Activated T-helper 2 cell treated with anti-CD3 and anti-CD28 coated beads, Interferon-gamma antibody, Interleukin-2, Interleukin-4, amounts not matched to agents 10 μg/mL and 5 μg/mL and 100 μg/mL, durations not matched to agents 14 hours and 24 hours and 36 hours (primary cell): ENCODE measurements at regions of chr17 and their contacts with region 1.

Region 1: DNA sequence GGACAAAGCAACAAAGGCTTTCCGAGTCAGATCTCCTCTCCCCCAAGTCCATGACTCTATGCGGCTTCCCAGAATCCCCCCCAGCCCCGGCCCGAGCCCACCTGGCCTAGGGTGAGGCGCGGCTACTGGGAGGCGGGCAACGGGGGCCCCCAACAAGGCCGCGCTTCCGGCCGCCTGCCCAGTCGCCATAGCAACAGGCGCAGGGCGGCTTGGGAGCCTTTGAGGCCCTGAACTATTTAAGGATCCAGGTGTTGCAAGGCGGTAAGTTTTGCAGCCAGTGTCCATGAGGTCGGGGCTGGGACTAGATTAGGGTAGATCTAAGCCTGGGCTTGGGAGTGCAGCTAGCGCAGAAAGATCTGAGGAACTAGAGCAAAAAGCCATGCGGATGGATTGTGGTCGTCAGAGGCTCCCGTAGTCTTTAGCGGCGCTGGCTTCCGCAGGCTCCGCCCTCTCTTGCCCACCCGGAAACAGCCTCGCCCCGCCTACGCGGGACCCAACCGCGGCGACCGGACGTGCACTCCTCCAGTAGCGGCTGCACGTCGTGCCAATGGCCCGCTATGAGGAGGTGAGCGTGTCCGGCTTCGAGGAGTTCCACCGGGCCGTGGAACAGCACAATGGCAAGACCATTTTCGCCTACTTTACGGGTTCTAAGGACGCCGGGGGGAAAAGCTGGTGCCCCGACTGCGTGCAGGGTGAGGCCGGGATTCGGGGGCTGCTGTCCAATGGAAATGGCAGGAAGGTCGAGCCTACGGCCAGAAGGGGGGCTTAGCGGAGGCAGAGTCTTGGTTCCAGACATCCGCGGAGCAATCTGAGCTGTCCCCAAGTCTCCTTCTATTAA is at the starts of genes KIAA0753 and TXNDC17:
- DNase-seq: peak; percentile 93
- H3K4me3 Mint-ChIP-seq: peak within 1 kb of the TSS; percentile 90
- H3K27ac Mint-ChIP-seq: peak within 1 kb of the TSS; percentile 99
- H3K4me1 Mint-ChIP-seq: peaks cover 52% of the 10 kb centered on the region
- H3K27me3 Mint-ChIP-seq: no peaks in the 10 kb centered on the region
- total RNA-seq, gene KIAA0753: 23.6 and 24.7 TPM in 2 replicates
- total RNA-seq, gene TXNDC17: 86.9 and 92.7 TPM in 2 replicates

Region 2: DNA sequence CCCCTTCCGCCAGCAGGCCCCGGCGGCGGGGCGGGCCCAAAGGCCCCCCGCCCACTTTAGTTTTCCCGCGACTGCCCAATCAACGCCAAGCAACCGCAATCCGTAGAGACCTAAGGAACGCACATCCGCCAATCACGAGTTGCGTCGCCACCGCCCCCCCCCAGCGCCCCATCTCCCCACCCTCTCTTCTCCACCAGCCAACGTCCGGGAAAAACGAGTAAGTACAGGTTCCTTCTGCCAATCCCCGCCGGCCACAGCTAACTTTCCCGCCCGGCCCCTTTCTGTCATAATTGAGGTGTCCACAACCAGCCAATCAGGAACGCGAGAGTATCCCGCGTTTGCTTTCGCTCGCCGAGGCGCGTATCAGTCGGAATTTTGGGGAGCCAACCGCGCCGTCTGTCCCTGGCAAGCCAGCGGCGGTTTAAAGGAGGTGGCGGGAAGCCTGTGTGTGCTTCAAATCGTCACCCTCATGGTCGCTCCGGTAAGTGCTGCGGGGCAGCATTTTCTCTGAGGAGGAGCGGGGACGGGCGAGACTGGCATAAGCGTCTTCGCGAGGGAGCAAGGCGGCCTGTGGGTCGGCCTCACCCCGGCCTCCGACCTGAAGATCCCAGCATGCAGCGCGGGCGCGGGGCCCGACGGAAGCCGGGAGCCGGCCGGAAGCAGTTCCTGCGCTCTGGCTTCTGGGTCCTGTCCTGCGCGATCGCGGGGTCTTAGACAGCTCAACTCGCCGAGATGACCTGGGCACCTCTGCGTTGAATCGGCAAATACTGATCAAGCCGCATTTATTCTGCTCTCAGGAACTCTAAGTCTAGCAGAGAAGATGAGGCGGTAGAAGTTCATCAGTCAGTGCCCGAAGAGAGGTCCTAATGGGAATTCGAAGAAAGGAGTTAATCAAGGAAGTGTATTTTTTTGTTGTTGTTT is 1154.3 kb before region 1 on chr17 and contains the start of gene MIS12:
- intact Hi-C with region 1: loop called (anchors 10 kb)
- DNase-seq: peak; percentile 96
- H3K4me3 Mint-ChIP-seq: peak within 1 kb of the TSS; percentile 97
- H3K27ac Mint-ChIP-seq: peak within 1 kb of the TSS; percentile 98
- H3K4me1 Mint-ChIP-seq: peaks cover 38% of the 10 kb centered on the region
- H3K27me3 Mint-ChIP-seq: no peaks in the 10 kb centered on the region
- total RNA-seq, gene MIS12: 34.1 and 34.9 TPM in 2 replicates

Region 3: DNA sequence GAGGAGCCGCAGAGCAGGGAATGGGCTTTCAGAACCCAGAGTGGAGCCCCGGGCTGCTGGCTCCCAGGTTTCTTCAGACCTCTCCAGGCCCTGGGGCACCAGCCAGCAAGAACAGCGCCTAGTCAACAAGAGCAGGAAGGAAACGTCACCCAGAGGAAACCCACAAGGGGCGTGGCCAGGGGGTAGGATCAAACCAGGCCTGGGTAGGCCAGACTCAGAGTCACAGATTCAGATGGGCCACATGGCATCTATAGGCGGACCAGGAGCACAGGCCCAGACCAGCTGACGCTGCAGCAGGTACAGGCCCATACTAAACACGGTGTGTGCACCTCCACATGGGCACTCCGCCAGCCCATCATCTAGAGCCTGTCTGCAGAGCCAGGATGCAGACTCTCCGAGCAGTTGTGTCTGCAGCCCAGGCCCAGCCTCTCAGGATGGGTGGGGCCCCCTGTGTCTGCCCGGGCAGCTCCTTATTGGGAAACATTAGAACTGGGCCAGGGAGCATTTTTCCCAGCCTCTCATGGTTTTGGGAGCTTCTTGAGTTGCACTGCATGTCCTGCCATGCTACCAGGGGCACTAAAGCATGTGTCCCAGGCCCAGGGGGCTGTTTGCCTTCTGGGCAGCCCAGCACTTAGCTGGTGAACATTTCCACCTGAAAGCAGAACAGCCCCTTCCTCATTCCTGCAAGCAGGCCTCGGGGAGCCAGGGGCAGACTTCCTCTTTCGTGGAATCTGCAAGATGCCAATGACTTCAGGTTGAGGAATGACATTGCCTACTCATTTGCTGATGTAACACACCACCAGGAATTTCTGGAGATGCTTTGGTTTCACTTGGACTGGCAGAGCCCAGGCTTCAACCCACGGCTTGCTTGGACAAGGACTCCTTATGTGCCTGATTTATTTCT is 1056.1 kb before region 1 on chr17 and contains the start of gene NLRP1:
- intact Hi-C with region 1: loop called (anchors 10 kb)
- DNase-seq: peak; percentile 92
- H3K4me3 Mint-ChIP-seq: peak within 1 kb of the TSS; percentile 89
- H3K27ac Mint-ChIP-seq: peak within 1 kb of the TSS; percentile 93
- H3K4me1 Mint-ChIP-seq: peaks cover 55% of the 10 kb centered on the region
- H3K27me3 Mint-ChIP-seq: peaks cover 6% of the 10 kb centered on the region
- total RNA-seq, gene NLRP1: 26.3 and 26.9 TPM in 2 replicates

Region 4: DNA sequence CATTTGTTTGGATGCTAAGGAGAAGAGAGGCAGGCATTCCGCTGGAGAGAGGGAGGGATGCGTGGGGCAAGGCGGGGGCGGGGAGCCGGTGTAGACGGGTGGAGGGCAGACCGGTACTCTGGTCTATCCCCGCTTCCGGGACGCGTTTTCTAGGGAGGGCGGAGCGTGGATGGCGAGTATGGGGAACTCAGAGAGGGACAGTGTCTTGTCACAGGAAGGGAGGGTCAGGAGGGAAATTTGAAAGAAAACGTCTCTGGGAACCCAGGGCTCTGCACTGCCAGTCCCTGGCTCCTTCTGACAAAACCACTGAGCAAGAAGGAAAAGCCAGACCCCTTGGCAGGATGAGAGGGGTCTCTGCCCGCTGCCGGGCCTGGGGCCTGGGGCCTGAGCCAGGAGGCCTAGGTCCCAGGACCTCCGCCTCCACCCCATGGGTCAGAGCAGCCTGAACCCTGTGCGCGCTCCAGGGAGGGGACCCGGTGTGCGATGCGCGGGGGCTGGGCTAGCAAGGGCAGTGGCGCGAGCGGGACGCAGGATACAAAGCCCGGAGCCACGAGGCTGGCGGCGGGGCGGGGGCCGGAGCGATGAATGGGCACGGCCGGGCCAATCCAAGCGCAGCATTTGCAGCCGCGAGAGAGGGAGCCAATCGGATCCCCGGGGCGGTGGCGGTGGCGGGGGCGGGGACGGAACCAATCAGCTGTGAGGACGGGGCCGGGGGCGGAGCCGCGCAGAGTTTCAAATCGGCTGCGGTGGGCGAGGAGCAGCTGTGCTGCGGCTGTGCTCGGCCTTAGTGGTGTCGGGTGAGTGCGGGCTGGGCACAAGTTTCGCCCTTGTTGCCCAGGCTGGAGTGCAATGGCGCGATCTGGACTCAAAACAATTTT is 196.8 kb before region 1 on chr17 and contains the start of gene PIMREG:
- intact Hi-C with region 1: loop called (anchors 10 kb)
- DNase-seq: peak; percentile 88
- H3K4me3 Mint-ChIP-seq: peak within 1 kb of the TSS; percentile 95
- H3K27ac Mint-ChIP-seq: peak within 1 kb of the TSS; percentile 97
- H3K4me1 Mint-ChIP-seq: peaks cover 11% of the 10 kb centered on the region
- H3K27me3 Mint-ChIP-seq: peaks cover 30% of the 10 kb centered on the region
- total RNA-seq, gene PIMREG: 8.9 and 9.3 TPM in 2 replicates

Region 5: DNA sequence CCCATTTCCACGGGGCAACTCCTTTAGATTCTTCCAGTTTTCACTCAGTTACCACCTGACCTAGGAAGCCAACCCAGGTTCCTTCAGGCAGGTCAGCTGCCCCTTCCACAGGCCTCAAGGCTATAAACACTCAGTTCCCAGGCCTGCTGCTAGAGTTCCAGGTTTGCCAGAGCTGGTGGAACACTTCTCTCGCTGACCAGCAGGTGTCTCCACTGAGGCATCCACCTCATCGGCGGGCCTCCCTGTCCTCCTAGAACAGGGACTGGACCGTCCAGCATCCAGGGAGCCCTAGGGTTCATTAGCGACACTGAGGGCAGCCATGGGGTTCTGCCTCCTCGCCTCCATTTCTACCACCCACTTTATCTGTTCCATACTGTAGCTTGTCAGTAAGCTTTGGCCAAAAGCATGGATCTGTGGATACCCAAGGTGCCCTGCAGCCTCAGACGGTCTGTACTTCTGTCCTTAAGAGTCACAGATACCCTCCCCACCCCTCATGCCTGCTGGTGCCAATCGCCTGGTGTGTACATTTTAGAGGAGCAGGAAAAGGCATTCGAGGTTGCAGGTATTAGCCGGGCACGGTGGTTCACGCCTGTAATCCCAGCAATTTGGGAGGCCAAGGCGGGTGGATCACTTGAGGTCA is 167.5 kb before region 1 on chr17:
- intact Hi-C with region 1: loop called (anchors 5 kb)
- DNase-seq: peak; percentile 49
- H3K4me3 Mint-ChIP-seq: no peak overlapping the region
- H3K27ac Mint-ChIP-seq: no peak overlapping the region
- H3K4me1 Mint-ChIP-seq: no peaks in the 10 kb centered on the region
- H3K27me3 Mint-ChIP-seq: no peaks in the 10 kb centered on the region

Region 6: GRCh38 chr17:6483507-6483906 is 157.2 kb before region 1 on chr17:
- intact Hi-C with region 1: no loop called
- DNase-seq: no peak
- H3K4me3 Mint-ChIP-seq: no peak overlapping the region
- H3K27ac Mint-ChIP-seq: no peak overlapping the region
- H3K4me1 Mint-ChIP-seq: no peaks in the 10 kb centered on the region
- H3K27me3 Mint-ChIP-seq: no peaks in the 10 kb centered on the region

Region 7: DNA sequence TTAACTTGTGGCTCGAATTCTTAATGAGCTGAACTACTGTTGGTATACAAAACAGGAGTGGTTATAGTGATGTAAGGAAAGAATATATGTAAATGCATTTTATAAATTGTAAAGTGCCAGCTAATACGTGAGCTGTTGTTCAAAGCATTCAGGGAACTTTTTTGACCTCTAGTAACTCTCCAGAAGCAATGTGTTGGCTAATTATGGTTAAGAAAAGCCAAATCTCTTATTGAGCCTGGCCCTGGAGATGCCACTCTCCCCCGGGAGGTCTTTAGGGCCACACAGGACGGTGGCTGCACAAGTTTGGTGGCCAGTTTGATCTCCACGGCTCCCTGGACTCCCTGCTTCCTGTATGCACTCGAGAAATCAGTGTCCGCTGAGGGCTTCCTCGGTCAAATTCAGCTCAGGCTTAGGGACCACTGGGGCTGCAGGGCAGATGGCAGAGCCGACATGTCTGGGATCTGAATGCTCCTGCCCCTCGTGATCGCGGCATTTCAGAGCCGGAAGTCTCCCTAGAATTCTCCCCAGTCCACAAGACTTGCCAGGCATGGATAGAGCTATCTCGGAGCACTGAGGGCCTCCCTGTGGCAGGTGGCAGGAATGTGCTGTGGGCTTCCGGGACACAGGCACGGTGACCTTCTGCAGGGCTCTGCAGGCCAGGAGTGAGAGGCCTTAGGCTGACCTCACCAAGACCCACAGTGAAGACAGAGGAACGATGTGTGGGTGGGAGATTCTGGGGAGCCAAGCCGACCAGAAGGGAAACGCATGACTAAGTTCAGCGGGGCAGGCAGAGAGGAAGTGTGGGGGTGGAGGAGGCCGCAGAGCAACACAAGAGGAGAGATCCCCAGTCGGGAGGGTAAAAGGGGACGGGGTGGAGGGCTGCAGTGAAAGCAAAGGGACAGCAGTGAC is 65.8 kb before region 1 on chr17:
- intact Hi-C with region 1: loop called (anchors 5 kb)
- DNase-seq: no peak
- H3K4me3 Mint-ChIP-seq: peak overlapping the region; percentile 15
- H3K27ac Mint-ChIP-seq: peak overlapping the region; percentile 18
- H3K4me1 Mint-ChIP-seq: peaks cover 20% of the 10 kb centered on the region
- H3K27me3 Mint-ChIP-seq: no peaks in the 10 kb centered on the region

Region 8: DNA sequence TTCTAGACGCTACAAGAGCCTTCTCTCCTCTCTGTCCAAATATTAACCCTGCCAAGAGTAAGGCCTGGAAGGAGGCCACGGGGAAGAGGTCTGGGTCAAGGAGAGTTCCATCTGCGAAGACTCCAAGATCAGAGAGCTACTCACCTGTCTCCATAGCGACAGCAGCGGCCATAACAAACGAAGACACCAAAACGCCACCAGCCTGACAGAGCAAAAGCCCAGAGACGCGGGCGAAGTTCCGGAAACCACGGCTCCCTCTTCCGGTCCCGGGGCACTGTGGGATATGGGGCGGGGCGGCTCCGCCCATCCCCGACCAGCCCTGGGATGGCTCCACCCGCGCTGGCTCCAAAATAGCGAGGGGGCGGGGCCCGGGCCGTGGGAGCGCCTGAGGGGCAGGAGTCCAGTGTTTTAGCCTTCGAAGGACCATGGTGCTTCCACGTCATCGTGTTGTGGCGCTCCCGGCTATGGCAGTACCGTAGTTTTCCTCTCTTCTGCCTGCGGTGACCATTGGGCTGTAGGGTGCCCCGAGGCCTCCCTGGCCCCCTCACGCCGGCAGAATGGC is 10.7 kb after region 1 on chr17 and contains the starts of genes C17orf100 and MED31:
- intact Hi-C with region 1: loop called (anchors 1 kb)
- DNase-seq: peak; percentile 94
- H3K4me3 Mint-ChIP-seq: peak within 1 kb of the TSS; percentile 96
- H3K27ac Mint-ChIP-seq: peak within 1 kb of the TSS; percentile 99
- H3K4me1 Mint-ChIP-seq: peaks cover 51% of the 10 kb centered on the region
- H3K27me3 Mint-ChIP-seq: peaks cover 25% of the 10 kb centered on the region
- total RNA-seq, gene C17orf100: 1.5 and 2.0 TPM in 2 replicates
- total RNA-seq, gene MED31: 19.1 and 24.2 TPM in 2 replicates